Right cardiac atrium (tissue), 5 donors: ENCODE measurements at regions of chr3 and their contacts with region 1.

Region 1: DNA sequence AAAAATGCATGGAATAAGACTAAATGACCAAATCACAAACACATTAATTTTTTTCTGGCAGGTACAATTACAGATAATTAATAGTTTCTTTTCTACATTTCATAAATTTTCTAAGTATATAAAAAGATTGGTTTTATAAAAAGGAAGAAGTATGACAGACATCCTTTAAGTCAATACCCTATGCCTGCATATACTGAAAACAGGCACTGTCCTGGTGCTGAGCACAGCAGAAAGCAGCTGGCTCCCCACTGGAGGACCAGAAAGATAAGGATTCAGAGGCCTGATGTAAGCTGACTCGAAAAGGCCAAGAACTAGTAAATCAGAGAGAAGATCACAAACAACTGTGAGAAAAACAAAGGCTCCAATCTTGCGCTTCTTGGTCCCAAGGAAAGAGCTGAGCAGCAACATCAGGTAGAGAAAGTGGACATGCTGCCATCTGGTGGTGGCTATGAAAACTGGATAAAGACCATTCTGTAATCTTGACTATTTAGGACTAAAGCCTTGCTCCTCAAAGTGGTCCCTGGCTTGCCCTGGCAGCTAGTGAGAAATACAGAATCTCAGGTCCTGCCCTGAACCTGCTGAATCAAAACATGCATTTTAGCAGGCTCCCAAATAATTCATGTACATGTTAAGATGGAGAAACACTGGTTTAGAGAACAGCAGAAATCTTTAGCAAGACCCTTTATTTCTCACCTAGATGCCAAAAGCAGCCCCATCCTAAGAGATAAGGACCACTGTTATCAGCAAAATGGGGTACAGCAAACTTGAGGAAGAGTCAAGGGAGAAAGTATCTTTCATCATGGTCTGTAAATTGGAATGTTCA is 76.0 kb downstream of the TRANK1 start:
- DNase-seq: no peak
- ATAC-seq: peak; percentile 61 to 76
- H3K4me3 ChIP-seq: no peak overlapping the region
- H3K27ac ChIP-seq: no peak overlapping the region
- H3K4me1 ChIP-seq: no peaks in the 10 kb centered on the region
- H3K27me3 ChIP-seq: no peaks in the 10 kb centered on the region

Region 2: DNA sequence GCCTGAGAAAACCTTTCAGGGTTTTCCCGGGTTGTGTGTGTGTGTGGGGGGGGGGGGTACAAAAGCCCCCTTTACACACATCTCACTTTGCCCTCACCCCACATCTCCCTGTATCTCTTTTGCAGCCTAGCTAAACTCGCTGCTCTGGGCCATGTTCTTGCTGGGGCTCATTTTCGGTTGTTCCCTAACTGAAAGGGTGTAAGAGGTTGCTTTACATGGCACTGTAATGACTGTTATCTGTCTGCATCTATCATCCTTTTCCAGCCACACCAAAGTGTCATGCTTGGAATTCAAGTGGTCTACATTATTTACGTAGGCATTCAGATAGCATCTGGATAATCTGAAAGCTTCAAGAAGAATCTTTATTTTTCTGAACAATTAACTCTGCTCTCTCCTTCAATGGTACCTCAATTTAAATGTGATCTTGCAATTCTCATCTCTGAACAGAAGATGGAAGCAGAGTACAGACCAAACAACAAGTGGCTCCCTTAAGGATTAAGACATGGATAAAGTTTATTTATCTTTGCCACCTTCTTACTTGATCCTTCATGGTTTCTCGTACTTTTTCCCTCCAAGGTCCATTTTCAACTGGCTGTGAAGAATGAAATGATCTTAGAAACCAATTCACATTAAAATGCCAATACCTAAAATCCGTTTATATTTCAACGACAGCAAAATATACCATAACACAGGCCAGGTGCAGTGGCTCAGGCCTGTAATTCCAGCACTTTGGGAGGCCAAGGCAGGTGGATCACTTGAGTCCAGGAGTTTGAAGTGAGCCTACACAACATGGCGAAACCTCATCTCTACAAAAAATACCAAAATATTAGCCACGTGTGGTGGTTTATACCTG is 139.4 kb before region 1 on chr3:
- intact Hi-C with region 1: loop called (anchors 2 to 10 kb)
- DNase-seq: no peak
- ATAC-seq: peak; percentile 61 to 65
- H3K4me3 ChIP-seq: no peak overlapping the region
- H3K27ac ChIP-seq: no peak overlapping the region
- H3K4me1 ChIP-seq: peaks cover 5% of the 10 kb centered on the region
- H3K27me3 ChIP-seq: no peaks in the 10 kb centered on the region

Region 3: DNA sequence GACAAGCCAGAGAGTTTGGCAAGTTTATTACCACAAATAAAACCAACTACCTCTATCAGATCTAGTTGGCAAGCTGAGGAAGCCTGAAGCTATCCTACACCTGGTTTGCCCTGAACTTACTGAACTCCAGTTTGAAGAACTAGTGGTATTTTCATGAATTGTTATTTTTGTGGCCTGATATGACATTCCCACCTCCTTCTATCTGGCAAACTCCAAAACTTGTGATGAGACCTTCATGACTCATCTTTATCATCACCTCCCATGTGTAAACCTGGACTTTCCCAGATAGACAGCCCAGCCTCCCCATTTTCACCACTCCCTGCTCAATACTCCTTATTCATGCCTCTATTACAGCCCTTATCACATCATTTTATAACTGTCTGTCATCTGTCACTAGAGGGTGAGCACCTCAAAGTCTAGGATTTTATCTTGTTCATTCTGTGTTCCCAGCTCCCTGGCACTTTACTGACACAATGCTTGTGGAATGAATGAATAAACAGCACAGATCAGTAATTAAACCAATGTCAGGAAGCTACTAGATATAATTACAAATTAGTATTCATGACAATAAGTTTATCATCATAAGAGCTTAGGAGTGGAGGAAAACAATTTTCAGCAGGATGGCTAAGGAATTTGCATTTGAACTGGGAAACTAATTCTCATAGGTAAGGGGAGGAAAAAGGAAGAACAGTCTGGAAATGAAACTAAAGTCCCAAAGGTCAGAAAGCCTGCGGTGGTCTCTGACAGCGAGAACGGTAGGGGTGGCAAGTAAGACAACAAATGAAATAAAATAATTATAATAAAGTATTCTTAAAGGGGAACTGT is 89.2 kb after region 1 on chr3:
- intact Hi-C with region 1: no loop called
- DNase-seq: no peak
- ATAC-seq: peak; percentile 24 to 63
- H3K4me3 ChIP-seq: no peak overlapping the region
- H3K27ac ChIP-seq: no peak overlapping the region
- H3K4me1 ChIP-seq: no peaks in the 10 kb centered on the region
- H3K27me3 ChIP-seq: no peaks in the 10 kb centered on the region

Region 4: DNA sequence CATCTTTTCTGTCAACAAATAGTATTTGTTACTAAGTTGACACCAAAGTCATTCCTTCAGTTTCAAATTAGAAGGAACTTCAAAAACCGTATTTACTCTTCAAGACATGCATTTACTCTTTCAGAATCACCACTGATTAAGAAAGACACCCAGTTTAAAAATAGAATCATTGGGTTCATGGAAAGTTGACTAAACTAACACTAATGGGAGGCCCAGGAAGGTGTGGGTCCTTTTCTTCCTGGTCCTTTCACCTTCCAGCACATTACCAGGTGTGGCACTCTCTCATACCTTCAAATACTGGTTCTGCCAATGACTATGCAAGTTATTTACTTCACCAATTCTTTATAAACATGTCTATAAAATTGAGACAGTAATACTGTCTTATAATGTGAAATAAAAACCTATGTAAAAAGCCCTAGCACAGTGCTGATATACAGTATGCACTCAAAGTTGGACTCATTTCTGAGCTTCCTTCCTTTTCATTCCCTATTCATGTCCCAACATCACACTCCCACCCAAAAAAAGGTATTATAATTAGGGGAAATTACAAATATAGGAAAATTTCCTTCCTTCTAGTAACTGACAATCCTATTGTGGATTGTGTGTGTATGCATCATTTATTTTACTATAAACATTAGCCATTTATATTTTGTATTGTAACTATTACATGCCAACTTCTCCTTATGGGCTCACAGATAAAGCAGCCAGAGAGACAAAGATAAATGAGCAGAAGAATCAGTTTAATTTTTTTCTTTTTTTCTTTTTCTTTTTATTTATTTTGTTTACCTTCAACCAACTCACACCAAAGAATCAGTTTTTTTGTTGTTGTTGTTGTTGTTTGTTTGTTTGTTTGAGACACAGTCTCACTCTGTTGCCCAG is 256.6 kb after region 1 on chr3:
- intact Hi-C with region 1: no loop called
- DNase-seq: no peak
- ATAC-seq: no peak
- H3K4me3 ChIP-seq: no peak overlapping the region
- H3K27ac ChIP-seq: no peak overlapping the region
- H3K4me1 ChIP-seq: no peaks in the 10 kb centered on the region
- H3K27me3 ChIP-seq: no peaks in the 10 kb centered on the region